Aorta (tissue), 5 donors: ENCODE measurements at regions of chr11 and their contacts with region 1.

Region 1: GRCh38 chr11:43738590-43739409 is 58.3 kb downstream of the HSD17B12 start:
- DNase-seq: no peak
- ATAC-seq: peak; percentile 47
- H3K4me3 ChIP-seq: no peak overlapping the region
- H3K27ac ChIP-seq: peak overlapping the region; percentile 43 to 64
- H3K4me1 ChIP-seq: peaks cover 3 to 19% of the 10 kb centered on the region in 2 donors
- H3K27me3 ChIP-seq: no peaks in the 10 kb centered on the region

Region 2: DNA sequence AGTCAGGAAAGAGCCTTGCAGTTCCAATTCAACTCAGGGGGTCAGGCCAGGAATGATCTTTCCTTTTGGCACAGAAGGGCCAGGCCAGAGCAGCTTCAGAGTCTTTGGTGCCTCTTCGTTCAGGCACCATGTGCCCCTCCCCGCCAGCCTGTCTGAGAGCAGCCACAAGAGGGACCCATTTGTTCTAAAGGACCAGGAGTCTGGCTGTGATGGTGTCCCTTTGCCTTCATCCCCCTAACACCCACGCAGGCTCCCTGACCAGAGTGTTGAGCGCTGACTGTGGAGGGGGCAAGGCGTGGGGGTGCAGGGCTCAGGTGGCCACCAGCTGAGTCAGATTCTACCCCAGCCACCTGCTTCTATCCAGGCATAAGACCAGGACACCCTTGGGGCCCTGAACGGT is 223.7 kb before region 1 on chr11:
- intact Hi-C with region 1: no loop called
- DNase-seq: no peak
- ATAC-seq: no peak
- H3K4me3 ChIP-seq: no peak overlapping the region
- H3K27ac ChIP-seq: no peak overlapping the region
- H3K4me1 ChIP-seq: no peaks in the 10 kb centered on the region
- H3K27me3 ChIP-seq: no peaks in the 10 kb centered on the region

Region 3: GRCh38 chr11:43680521-43681400 is 58.0 kb before region 1 on chr11 and contains the start of gene HSD17B12:
- intact Hi-C with region 1: loop called in 1 of 2 experiments (anchors 2 kb)
- DNase-seq: peak; percentile 100
- ATAC-seq: peak; percentile 100
- H3K4me3 ChIP-seq: peak within 1 kb of the TSS; percentile 40 to 92
- H3K27ac ChIP-seq: peak within 1 kb of the TSS; percentile 63 to 71
- H3K4me1 ChIP-seq: peaks cover 0 to 1% of the 10 kb centered on the region in 2 donors
- H3K27me3 ChIP-seq: no peaks in the 10 kb centered on the region
- total RNA-seq, gene HSD17B12: 106 to 108 TPM